HCT116 (cell line): ENCODE measurements at regions of chr13 and their contacts with region 1.

Region 1: GRCh38 chr13:112942689-112943308 is 26.2 kb upstream of the MCF2L start:
- DNase-seq: peak; percentile 91
- ATAC-seq: peak; percentile 94
- H3K4me3 ChIP-seq: peak overlapping the region; percentile 43 to 63
- H3K27ac ChIP-seq: peak overlapping the region; percentile 18; the same call in 1 of the 2 replicates
- H3K4me1 ChIP-seq: peaks cover 4 to 16% of the 10 kb centered on the region in 2 experiments; a peak in 3 of 4 replicates
- H3K27me3 ChIP-seq: no peaks in the 10 kb centered on the region
- CTCF ChIP-seq: peak; percentile 92 to 98 (median 97)
- POLR2A ChIP-seq: no peak
- RAD21 ChIP-seq: peak; percentile 95

Region 2: GRCh38 chr13:112899281-112900225 is 43.2 kb before region 1 on chr13:
- CTCF ChIA-PET with region 1: no interaction called
- POLR2A ChIA-PET with region 1: no interaction called
- RAD21 ChIA-PET with region 1: no interaction called
- intact Hi-C with region 1: no loop called
- DNase-seq: no peak
- ATAC-seq: no peak
- H3K4me3 ChIP-seq: no peak overlapping the region
- H3K27ac ChIP-seq: no peak overlapping the region
- H3K4me1 ChIP-seq: peaks cover 0 to 5% of the 10 kb centered on the region in 2 experiments; a peak in 1 of 4 replicates
- H3K27me3 ChIP-seq: no peaks in the 10 kb centered on the region
- CTCF ChIP-seq: no peak
- POLR2A ChIP-seq: no peak
- RAD21 ChIP-seq: no peak

Region 3: DNA sequence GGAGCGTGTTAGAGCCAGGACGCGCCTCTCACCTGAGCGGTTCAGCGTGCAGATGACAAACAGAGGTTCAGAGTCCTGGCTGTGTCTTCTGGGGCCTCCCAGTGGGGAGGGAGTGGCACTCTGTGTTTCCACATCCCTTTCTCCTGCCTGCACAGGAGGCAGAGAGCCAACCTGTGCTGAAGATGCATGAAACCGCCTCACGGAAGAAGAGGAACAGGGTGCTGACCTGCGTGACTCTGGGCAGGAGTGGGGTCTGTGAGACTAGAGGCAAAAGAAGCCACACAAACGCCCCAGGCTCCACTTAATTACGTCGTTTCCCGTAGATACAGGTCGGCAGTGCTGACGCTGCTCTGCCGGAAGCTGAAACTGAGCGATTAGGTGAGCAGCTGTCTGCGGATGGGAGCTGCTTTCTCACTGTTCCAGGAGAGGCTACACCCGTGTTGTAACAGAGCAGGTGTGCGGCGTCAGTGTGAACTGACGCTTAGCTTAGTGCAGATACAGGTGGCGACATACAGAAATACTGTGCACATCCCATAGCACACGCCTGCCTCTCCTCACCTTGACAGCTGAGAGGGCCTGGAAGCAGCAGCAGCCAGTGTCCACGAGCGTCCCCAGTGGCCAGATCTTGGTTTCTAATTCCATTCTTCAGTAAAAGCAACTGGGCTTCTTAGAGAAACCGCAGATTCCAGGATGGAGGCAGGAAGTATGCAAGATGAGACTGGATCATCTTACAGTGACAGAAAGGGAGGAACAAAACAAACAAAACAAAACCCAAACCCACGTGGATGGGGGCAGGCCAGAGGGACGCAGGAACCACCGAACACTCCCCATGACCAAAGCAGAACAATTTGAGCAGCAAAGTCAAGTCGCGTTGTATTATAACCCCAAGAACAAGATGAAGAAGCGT is 11.5 kb before region 1 on chr13:
- CTCF ChIA-PET with region 1: interaction called, 18 read pairs
- POLR2A ChIA-PET with region 1: no interaction called
- RAD21 ChIA-PET with region 1: no interaction called
- intact Hi-C with region 1: no loop called
- DNase-seq: peak; percentile 46
- ATAC-seq: peak; percentile 97
- H3K4me3 ChIP-seq: peak overlapping the region in 1 of 2 experiments; percentile 37; a peak in 2 of 4 replicates
- H3K27ac ChIP-seq: no peak overlapping the region
- H3K4me1 ChIP-seq: peaks cover 9 to 13% of the 10 kb centered on the region in 2 experiments; a peak in 3 of 4 replicates
- H3K27me3 ChIP-seq: no peaks in the 10 kb centered on the region
- CTCF ChIP-seq: peak; percentile 43 to 90 (median 83); a peak in 5 of 6 replicates
- POLR2A ChIP-seq: no peak
- RAD21 ChIP-seq: peak; percentile 63

Region 4: GRCh38 chr13:113029487-113030258 is 86.9 kb after region 1 on chr13:
- CTCF ChIA-PET with region 1: interaction called, 20 read pairs
- POLR2A ChIA-PET with region 1: no interaction called
- RAD21 ChIA-PET with region 1: no interaction called
- intact Hi-C with region 1: loop called (anchors 1 kb)
- DNase-seq: no peak
- ATAC-seq: peak; percentile 85
- H3K4me3 ChIP-seq: no peak overlapping the region
- H3K27ac ChIP-seq: no peak overlapping the region
- H3K4me1 ChIP-seq: no peaks in the 10 kb centered on the region
- H3K27me3 ChIP-seq: no peaks in the 10 kb centered on the region
- CTCF ChIP-seq: peak; percentile 77 to 98 (median 98); a peak in 5 of 6 replicates
- POLR2A ChIP-seq: no peak
- RAD21 ChIP-seq: peak; percentile 79